SK-N-SH (cell line): ENCODE measurements at regions of chr9 and their contacts with region 1.

Region 1: DNA sequence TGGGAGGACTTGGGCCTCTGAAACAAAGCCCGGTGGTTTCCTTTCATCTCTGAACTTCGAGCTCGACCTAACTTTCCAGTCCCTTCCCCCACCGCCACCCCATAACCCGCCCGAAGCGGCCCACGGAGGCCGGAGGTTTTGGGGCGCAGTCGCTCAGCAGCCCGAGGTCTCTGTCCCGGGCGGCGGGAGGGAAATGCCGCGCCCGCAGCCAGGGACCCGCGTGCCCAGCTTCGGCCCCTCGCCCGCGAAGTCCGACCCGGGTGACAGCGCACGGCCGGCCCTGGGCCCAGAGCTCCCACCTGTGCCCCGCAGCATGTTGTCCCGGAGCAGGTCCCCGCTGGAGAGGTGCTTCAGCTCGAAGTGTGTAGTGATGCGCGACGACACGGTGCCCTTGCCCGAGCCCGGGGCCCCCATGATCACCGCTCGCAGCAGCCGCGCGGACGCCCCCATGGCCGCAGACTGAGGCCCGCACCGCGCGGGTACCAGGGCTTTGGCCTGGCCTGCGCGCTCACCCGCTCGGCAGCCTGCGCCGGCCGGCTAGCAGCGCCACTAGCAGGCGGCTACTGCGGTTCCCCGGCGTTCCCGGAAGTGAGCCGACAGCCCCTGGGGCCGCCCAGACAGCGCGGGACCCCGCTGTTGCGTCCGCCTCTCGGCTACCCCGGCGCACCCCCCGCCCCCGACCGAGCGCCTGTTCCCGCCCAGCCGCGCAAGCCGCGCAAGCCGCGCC is at the start of gene AK3:
- DNase-seq: peak; percentile 99
- H3K4me3 ChIP-seq: peak within 1 kb of the TSS; percentile 73 to 92
- H3K27ac ChIP-seq: peak within 1 kb of the TSS; percentile 67 to 78
- H3K4me1 ChIP-seq: peaks cover 5 to 13% of the 10 kb centered on the region in 2 experiments; a peak in 2 of 4 replicates
- H3K27me3 ChIP-seq: no peaks in the 10 kb centered on the region
- CTCF ChIP-seq: peak; percentile 23; the same call in 1 of the 2 replicates
- EP300 ChIP-seq: no peak
- RAD21 ChIP-seq: peak; percentile 42
- polyA plus RNA-seq, gene AK3: 20.6 and 30.8 TPM in 2 replicates

Region 2: GRCh38 chr9:4725706-4726442 is 14.9 kb before region 1 on chr9:
- CTCF ChIA-PET with region 1: interaction called, 4 read pairs
- POLR2A ChIA-PET with region 1: interaction called, 10 read pairs
- DNase-seq: no peak
- H3K4me3 ChIP-seq: no peak overlapping the region
- H3K27ac ChIP-seq: no peak overlapping the region
- H3K4me1 ChIP-seq: no peaks in the 10 kb centered on the region
- H3K27me3 ChIP-seq: no peaks in the 10 kb centered on the region
- CTCF ChIP-seq: no peak
- EP300 ChIP-seq: no peak
- RAD21 ChIP-seq: no peak